ENCODE measurements at regions of chr7 and their contacts with region 1.

Region 1: DNA sequence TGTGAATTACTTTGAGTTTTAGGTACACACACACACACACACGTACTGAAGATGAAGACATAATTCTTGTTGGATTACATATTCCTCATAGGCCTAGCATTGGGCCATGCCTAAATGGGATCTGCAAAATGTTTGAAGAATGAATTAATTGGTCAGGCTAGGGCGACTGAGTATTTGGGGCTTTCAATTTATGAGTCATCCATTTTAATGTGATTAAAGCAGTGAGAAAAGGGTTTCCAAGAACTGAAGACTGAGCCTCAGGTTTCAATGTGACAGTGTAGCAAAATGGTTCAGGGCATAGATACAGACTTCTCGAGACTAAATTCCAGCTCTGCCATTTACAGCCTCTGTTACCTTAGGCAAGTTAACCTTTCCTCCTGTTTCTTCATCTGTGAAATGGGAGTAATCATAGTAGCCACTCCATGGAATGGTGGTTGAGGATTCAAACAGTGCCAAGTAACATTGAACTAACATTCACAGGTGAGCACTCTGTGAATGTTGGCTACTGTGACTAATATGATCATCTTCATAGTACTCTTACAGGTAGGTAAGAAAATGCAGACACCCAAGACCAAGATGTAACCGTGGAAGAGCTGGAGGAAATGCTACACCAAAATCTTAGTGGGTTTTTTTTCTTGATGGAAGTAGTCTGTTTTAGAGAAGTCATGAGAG is 7.6 kb downstream of the BPGM start:
- DNase-seq: no peak
- ATAC-seq: peak; percentile 96
- H3K4me3 Mint-ChIP-seq: peak overlapping the region; percentile 5
- H3K27ac Mint-ChIP-seq: peak overlapping the region; percentile 82
- H3K4me1 Mint-ChIP-seq: peaks cover 54% of the 10 kb centered on the region
- H3K27me3 Mint-ChIP-seq: no peaks in the 10 kb centered on the region

Region 2: GRCh38 chr7:134669845-134670373 is 15.7 kb after region 1 on chr7:
- CTCF ChIA-PET with region 1: interaction called, 4 read pairs
- POLR2A ChIA-PET with region 1: interaction called, 4 read pairs
- intact Hi-C with region 1: loop called (anchors 1 kb)
- DNase-seq: peak; percentile 83
- ATAC-seq: peak; percentile 75
- H3K4me3 Mint-ChIP-seq: peak overlapping the region; percentile 50
- H3K27ac Mint-ChIP-seq: peak overlapping the region; percentile 89
- H3K4me1 Mint-ChIP-seq: peaks cover 51% of the 10 kb centered on the region
- H3K27me3 Mint-ChIP-seq: no peaks in the 10 kb centered on the region

Measured in activated CD4-positive, alpha-beta T cell treated with anti-CD3 and anti-CD28 coated beads for 36 hours (primary cell).